ENCODE measurements at regions of chr15 and their contacts with region 1.

Region 1: DNA sequence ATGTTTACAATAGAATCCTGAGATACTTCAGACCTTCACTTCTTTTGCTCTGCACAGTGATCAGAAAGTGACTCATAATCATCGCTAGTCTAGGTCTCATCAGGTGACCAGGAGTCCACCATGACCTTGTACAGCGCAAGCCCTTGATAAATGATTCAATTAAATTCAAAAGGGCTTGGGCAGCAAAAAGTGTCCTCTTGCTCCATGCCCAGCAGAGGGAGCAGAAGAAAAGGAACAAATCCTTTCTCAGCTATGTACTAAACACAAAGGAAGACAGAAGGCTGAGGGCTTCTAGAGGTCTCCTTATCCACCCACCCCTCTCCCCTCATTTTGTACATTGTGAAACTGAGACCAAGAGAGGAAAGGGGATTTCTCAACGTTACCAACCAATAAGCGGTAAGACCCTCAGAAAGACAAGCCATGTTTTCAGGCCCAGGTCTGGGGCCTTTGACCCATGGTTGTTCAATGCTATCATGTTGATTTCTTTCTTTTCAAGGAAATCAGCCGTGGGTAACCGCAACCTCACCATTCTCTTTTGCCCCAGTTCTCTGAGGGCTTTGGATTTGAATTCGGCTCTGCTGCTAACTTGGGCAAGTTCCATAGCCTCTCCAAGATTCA is 74.8 kb downstream of the AQP9 start:
- DNase-seq: no peak
- ATAC-seq: peak in 1 of 2 donors; percentile 63
- H3K4me3 ChIP-seq: no peak overlapping the region
- H3K27ac ChIP-seq: no peak overlapping the region
- H3K4me1 ChIP-seq: no peaks in the 10 kb centered on the region
- H3K27me3 ChIP-seq: no peaks in the 10 kb centered on the region
- CTCF ChIP-seq: peak in 3 of 5 experiments; percentile 12 to 46 (median 23)
- POLR2A ChIP-seq: no peak

Region 2: GRCh38 chr15:58046467-58046866 is 166.6 kb before region 1 on chr15:
- in situ Hi-C with region 1: no loop called
- intact Hi-C with region 1: no loop called
- DNase-seq: no peak
- ATAC-seq: no peak
- H3K4me3 ChIP-seq: no peak overlapping the region
- H3K27ac ChIP-seq: no peak overlapping the region
- H3K4me1 ChIP-seq: no peaks in the 10 kb centered on the region
- H3K27me3 ChIP-seq: peaks cover 0 to 3% (median 0%) of the 10 kb centered on the region in 3 donors
- CTCF ChIP-seq: no peak
- POLR2A ChIP-seq: no peak

Region 3: GRCh38 chr15:58165661-58166060 is 47.4 kb before region 1 on chr15:
- in situ Hi-C with region 1: no loop called
- intact Hi-C with region 1: no loop called
- DNase-seq: no peak
- ATAC-seq: no peak
- H3K4me3 ChIP-seq: no peak overlapping the region
- H3K27ac ChIP-seq: no peak overlapping the region
- H3K4me1 ChIP-seq: no peaks in the 10 kb centered on the region
- H3K27me3 ChIP-seq: no peaks in the 10 kb centered on the region
- CTCF ChIP-seq: no peak
- POLR2A ChIP-seq: no peak

Region 4: DNA sequence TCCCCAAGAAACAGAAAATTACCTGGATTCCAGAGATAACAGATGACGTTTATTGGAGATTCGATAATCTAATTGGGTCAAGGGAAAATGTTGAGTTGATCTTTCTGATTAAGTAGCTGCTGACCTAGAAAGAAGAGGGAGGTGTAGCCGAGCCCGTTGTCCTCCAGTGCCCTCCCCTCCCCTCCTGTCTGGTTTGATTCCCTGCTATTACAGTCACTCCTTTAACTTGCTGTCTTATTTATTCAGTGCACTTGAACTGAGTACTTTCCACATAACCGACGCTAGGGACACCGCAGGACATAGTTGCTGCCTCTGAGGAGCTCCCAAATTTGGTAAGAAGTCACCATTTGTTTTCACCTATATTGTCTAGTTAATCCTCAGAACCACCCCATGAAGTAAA is 28.9 kb after region 1 on chr15:
- in situ Hi-C with region 1: no loop called
- intact Hi-C with region 1: no loop called
- DNase-seq: no peak
- ATAC-seq: peak; percentile 46 to 48
- H3K4me3 ChIP-seq: no peak overlapping the region
- H3K27ac ChIP-seq: peak overlapping the region in 3 of 4 donors; percentile 67 to 74 (median 72)
- H3K4me1 ChIP-seq: peaks cover 34 to 37% of the 10 kb centered on the region in 2 donors
- H3K27me3 ChIP-seq: no peaks in the 10 kb centered on the region
- CTCF ChIP-seq: no peak
- POLR2A ChIP-seq: no peak

Region 5: DNA sequence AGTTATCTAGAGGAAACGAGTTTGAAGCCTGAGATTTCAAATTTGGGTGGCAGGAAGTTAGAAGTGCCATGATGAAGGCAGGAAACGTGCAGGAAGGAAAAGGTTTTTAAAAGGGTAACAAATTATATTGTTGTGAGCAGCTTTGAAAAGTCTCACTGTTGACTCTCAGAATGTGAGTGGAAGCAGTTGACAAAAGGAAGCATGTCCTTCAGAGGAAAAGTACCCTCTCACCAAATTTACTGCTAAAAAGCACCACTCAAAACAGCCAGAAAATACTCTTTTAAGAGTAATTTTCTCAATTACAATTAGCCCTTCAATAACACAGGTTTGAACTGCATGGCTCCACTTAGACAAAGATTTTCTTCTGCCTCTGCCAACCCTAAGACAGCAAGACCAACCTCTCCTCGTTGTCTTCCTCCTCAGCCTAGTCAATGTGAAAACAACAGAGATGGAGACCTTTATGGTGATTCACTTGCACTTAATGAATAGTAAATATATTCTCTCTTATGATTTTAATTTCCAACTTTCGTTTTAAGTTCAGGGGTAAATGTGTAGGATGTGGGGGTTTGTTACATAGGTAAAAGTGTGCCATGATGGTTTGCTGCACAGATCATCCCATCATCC is 101.7 kb after region 1 on chr15:
- in situ Hi-C with region 1: no loop called
- intact Hi-C with region 1: no loop called
- DNase-seq: no peak
- ATAC-seq: no peak
- H3K4me3 ChIP-seq: no peak overlapping the region
- H3K27ac ChIP-seq: no peak overlapping the region
- H3K4me1 ChIP-seq: peaks cover 0 to 11% of the 10 kb centered on the region in 2 donors
- H3K27me3 ChIP-seq: no peaks in the 10 kb centered on the region
- CTCF ChIP-seq: no peak
- POLR2A ChIP-seq: no peak

Region 6: GRCh38 chr15:59501597-59501996 is 1288.6 kb after region 1 on chr15:
- in situ Hi-C with region 1: loop called in 2 of 4 experiments (anchors 25 kb)
- intact Hi-C with region 1: no loop called
- DNase-seq: no peak
- ATAC-seq: no peak
- H3K4me3 ChIP-seq: no peak overlapping the region
- H3K27ac ChIP-seq: no peak overlapping the region
- H3K4me1 ChIP-seq: no peaks in the 10 kb centered on the region
- H3K27me3 ChIP-seq: no peaks in the 10 kb centered on the region
- CTCF ChIP-seq: peak in 4 of 5 experiments; percentile 22 to 50 (median 38)
- POLR2A ChIP-seq: no peak

Measured in gastrocnemius medialis (tissue), 4 donors.